CD14-positive monocyte (primary cell): ENCODE measurements at regions of chr20 and their contacts with region 1.

Region 1: GRCh38 chr20:37336369-37337207 is 9.4 kb upstream of the SRC start:
- DNase-seq: peak; percentile 91 to 99 (median 95)
- H3K4me3 ChIP-seq: peak overlapping the region in 1 of 3 experiments; percentile 45
- H3K4me3 Mint-ChIP-seq: peak overlapping the region; percentile 63 to 80
- H3K27ac ChIP-seq: peak overlapping the region; percentile 94 to 99
- H3K27ac Mint-ChIP-seq: peak overlapping the region; percentile 95 to 99 (median 97)
- H3K4me1 ChIP-seq: peaks cover 53 to 59% of the 10 kb centered on the region in 2 donors
- H3K4me1 Mint-ChIP-seq: peaks cover 55% of the 10 kb centered on the region
- H3K27me3 ChIP-seq: no peaks in the 10 kb centered on the region
- H3K27me3 Mint-ChIP-seq: peaks cover 1 to 3% (median 2%) of the 10 kb centered on the region in 3 donors
- CTCF ChIP-seq: no peak

Region 2: DNA sequence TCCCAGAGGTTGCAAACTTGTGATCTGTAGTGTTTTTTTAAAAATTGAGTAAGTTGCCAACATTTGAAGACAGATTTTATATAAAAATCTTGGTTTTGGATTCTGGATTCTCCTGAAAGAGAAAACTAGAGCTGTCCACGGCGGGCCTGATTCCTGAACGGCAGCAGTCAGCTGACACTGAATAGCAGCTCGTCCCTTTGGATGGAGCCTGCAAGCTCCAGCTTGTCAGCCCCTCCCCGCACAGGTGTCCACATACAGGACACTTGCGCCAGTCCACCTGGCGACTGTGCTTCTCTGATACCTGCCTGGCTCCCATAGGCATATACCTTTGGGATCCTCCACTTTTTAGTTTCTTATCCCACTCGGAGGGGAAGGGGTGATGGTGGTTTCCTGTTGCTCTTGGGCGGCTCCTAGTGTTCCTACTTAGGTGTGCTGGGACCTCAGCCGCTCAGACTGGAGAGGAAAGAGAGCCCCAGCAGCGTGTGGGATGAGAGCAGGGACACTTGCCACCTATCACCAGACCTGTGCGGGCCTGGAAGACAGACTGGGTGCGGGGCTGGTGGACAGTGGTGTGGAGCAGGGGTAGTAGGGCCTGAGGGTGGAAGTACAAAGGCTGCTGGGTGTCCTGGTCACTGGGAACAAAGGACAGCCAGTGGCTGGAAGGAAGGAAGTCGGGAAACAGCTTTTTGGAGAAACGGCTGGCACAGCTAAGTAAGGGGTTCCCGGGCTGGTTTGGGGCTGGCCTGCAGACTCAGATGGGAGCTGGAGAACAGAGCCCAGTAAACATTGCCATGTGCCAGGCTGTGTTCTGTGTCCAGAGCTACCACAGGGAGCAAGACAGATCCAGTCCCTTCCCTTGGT is 93.3 kb before region 1 on chr20:
- intact Hi-C with region 1: no loop called
- DNase-seq: no peak
- H3K4me3 ChIP-seq: no peak overlapping the region
- H3K4me3 Mint-ChIP-seq: no peak overlapping the region
- H3K27ac ChIP-seq: peak overlapping the region in 1 of 2 donors; percentile 41
- H3K27ac Mint-ChIP-seq: peak overlapping the region in 4 of 7 donors; percentile 20 to 55 (median 32)
- H3K4me1 ChIP-seq: peaks cover 0 to 2% of the 10 kb centered on the region in 2 donors
- H3K4me1 Mint-ChIP-seq: peaks cover 2% of the 10 kb centered on the region
- H3K27me3 ChIP-seq: no peaks in the 10 kb centered on the region
- H3K27me3 Mint-ChIP-seq: peaks cover 0 to 3% (median 0%) of the 10 kb centered on the region in 3 donors
- CTCF ChIP-seq: no peak

Region 3: GRCh38 chr20:37265152-37265551 is 71.4 kb before region 1 on chr20:
- intact Hi-C with region 1: loop called (anchors 5 kb)
- DNase-seq: peak; percentile 84 to 91 (median 90)
- H3K4me3 ChIP-seq: no peak overlapping the region
- H3K4me3 Mint-ChIP-seq: no peak overlapping the region
- H3K27ac ChIP-seq: peak overlapping the region; percentile 53 to 81
- H3K27ac Mint-ChIP-seq: peak overlapping the region; percentile 37 to 89 (median 78)
- H3K4me1 ChIP-seq: peaks cover 16% of the 10 kb centered on the region in 2 donors
- H3K4me1 Mint-ChIP-seq: peaks cover 17% of the 10 kb centered on the region
- H3K27me3 ChIP-seq: no peaks in the 10 kb centered on the region
- H3K27me3 Mint-ChIP-seq: peaks cover 1 to 3% (median 2%) of the 10 kb centered on the region in 3 donors
- CTCF ChIP-seq: no peak

Region 4: GRCh38 chr20:37270576-37271420 is 65.8 kb before region 1 on chr20:
- intact Hi-C with region 1: loop called (anchors 5 kb)
- DNase-seq: peak; percentile 96 to 99 (median 98)
- H3K4me3 ChIP-seq: peak overlapping the region in 1 of 3 experiments; percentile 4
- H3K4me3 Mint-ChIP-seq: peak overlapping the region; percentile 9 to 48
- H3K27ac ChIP-seq: peak overlapping the region; percentile 97 to 100
- H3K27ac Mint-ChIP-seq: peak overlapping the region; percentile 96 to 100 (median 99)
- H3K4me1 ChIP-seq: peaks cover 66% of the 10 kb centered on the region in 2 donors
- H3K4me1 Mint-ChIP-seq: peaks cover 65% of the 10 kb centered on the region
- H3K27me3 ChIP-seq: no peaks in the 10 kb centered on the region
- H3K27me3 Mint-ChIP-seq: peaks cover 0 to 1% (median 0%) of the 10 kb centered on the region in 3 donors
- CTCF ChIP-seq: no peak

Region 5: GRCh38 chr20:37295001-37295400 is 41.6 kb before region 1 on chr20:
- intact Hi-C with region 1: loop called in 1 of 2 experiments (anchors 2 kb)
- DNase-seq: peak; percentile 60 to 88 (median 80)
- H3K4me3 ChIP-seq: peak overlapping the region in 1 of 3 experiments; percentile 42
- H3K4me3 Mint-ChIP-seq: peak overlapping the region; percentile 28 to 63
- H3K27ac ChIP-seq: peak overlapping the region; percentile 90 to 99
- H3K27ac Mint-ChIP-seq: peak overlapping the region; percentile 92 to 99 (median 97)
- H3K4me1 ChIP-seq: peaks cover 67 to 86% of the 10 kb centered on the region in 2 donors
- H3K4me1 Mint-ChIP-seq: peaks cover 78% of the 10 kb centered on the region
- H3K27me3 ChIP-seq: no peaks in the 10 kb centered on the region
- H3K27me3 Mint-ChIP-seq: no peaks in the 10 kb centered on the region
- CTCF ChIP-seq: no peak

Region 6: DNA sequence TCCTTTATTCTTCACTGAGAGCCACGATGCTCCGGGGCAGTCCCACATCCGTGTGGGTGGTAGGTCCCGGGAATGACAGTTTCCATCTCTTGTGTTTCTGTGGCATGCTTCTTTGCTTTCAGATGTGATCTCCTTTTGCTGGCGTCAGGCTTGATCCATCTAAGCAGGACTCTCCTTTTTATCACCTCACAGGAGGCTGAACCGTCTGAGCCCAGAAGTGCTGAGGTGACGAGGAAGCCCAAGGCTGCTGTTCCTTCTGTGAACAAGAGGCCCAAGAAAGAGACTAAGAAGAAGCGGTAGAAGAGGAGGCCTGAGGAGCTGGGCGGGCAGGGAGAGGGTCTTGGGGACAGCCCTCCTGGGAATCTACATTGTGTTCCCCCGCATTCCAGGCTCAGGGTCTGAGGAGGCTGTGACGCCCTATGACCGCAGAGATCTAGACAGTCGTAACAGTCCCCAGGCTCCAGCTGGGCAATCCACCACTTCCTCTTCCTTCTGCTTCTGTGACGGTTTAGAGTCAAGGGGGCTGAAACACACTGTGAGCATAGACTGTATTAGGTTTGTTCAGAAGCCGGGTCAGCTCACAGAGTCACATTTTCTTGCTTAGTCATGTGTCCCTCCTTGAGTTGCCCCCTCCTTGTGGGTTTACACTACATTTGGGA is 20.3 kb before region 1 on chr20:
- intact Hi-C with region 1: loop called in 1 of 2 experiments (anchors 2 kb)
- DNase-seq: peak; percentile 85 to 93 (median 86)
- H3K4me3 ChIP-seq: no peak overlapping the region
- H3K4me3 Mint-ChIP-seq: peak overlapping the region; percentile 24 to 26
- H3K27ac ChIP-seq: peak overlapping the region; percentile 60 to 90
- H3K27ac Mint-ChIP-seq: peak overlapping the region; percentile 78 to 97 (median 92)
- H3K4me1 ChIP-seq: peaks cover 43 to 44% of the 10 kb centered on the region in 2 donors
- H3K4me1 Mint-ChIP-seq: peaks cover 56% of the 10 kb centered on the region
- H3K27me3 ChIP-seq: no peaks in the 10 kb centered on the region
- H3K27me3 Mint-ChIP-seq: peaks cover 0 to 2% (median 0%) of the 10 kb centered on the region in 3 donors
- CTCF ChIP-seq: no peak

Region 7: GRCh38 chr20:37365760-37366638 is 29.4 kb after region 1 on chr20:
- intact Hi-C with region 1: loop called in 1 of 2 experiments (anchors 5 kb)
- DNase-seq: peak; percentile 69 to 85 (median 82)
- H3K4me3 ChIP-seq: peak overlapping the region in 1 of 3 experiments; percentile 52
- H3K4me3 Mint-ChIP-seq: peak overlapping the region; percentile 9 to 78
- H3K27ac ChIP-seq: peak overlapping the region; percentile 13 to 90
- H3K27ac Mint-ChIP-seq: peak overlapping the region; percentile 86 to 95 (median 93)
- H3K4me1 ChIP-seq: peaks cover 38 to 46% of the 10 kb centered on the region in 2 donors
- H3K4me1 Mint-ChIP-seq: peaks cover 36% of the 10 kb centered on the region
- H3K27me3 ChIP-seq: no peaks in the 10 kb centered on the region
- H3K27me3 Mint-ChIP-seq: peaks cover 0 to 3% (median 2%) of the 10 kb centered on the region in 3 donors
- CTCF ChIP-seq: no peak

Region 8: DNA sequence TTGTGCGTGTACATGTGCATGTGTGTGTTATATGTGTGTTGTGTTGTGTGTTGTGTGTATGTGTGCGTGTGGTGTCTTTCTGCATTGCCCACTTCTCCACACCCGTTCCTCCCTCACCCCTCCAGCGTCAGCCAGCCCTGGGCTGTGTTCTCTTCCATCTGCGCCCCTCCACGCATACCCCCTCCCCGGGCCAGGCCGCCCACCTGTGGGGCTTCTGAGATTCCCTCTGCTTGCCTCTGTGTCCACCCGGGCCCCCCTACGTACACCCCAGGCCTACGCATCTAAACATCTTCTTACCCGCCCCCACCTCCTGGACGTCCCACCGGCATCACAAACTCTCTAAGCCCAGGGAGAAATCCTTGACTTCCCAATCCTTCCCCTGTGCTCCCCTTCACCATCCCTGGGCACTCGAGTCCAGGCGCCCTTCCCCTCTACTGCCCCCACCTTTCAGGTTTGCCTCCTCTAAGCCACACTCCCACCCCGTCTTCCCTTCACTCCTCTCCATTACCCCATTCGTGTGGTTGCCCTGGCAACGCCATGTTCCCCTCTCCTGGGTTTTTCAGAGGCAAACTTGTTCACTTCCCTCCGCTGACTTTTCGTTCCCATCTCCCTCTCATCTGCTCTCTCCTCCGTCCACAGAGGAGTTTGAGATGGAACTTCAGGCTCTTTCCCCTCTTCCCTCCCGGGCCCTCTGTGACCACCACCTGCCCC is 102.8 kb after region 1 on chr20:
- intact Hi-C with region 1: no loop called
- DNase-seq: no peak
- H3K4me3 ChIP-seq: no peak overlapping the region
- H3K4me3 Mint-ChIP-seq: no peak overlapping the region
- H3K27ac ChIP-seq: no peak overlapping the region
- H3K27ac Mint-ChIP-seq: no peak overlapping the region
- H3K4me1 ChIP-seq: no peaks in the 10 kb centered on the region
- H3K4me1 Mint-ChIP-seq: no peaks in the 10 kb centered on the region
- H3K27me3 ChIP-seq: peaks cover 0 to 2% of the 10 kb centered on the region in 2 donors
- H3K27me3 Mint-ChIP-seq: peaks cover 0 to 8% (median 3%) of the 10 kb centered on the region in 3 donors
- CTCF ChIP-seq: no peak

Region 9: GRCh38 chr20:37480919-37481318 is 144.3 kb after region 1 on chr20:
- intact Hi-C with region 1: no loop called
- DNase-seq: no peak
- H3K4me3 ChIP-seq: no peak overlapping the region
- H3K4me3 Mint-ChIP-seq: no peak overlapping the region
- H3K27ac ChIP-seq: no peak overlapping the region
- H3K27ac Mint-ChIP-seq: no peak overlapping the region
- H3K4me1 ChIP-seq: no peaks in the 10 kb centered on the region
- H3K4me1 Mint-ChIP-seq: peaks cover 5% of the 10 kb centered on the region
- H3K27me3 ChIP-seq: peaks cover 0 to 2% of the 10 kb centered on the region in 2 donors
- H3K27me3 Mint-ChIP-seq: peaks cover 13 to 22% (median 14%) of the 10 kb centered on the region in 3 donors
- CTCF ChIP-seq: no peak